ENCODE measurements at regions of chr9 and their contacts with region 1.

Region 1: DNA sequence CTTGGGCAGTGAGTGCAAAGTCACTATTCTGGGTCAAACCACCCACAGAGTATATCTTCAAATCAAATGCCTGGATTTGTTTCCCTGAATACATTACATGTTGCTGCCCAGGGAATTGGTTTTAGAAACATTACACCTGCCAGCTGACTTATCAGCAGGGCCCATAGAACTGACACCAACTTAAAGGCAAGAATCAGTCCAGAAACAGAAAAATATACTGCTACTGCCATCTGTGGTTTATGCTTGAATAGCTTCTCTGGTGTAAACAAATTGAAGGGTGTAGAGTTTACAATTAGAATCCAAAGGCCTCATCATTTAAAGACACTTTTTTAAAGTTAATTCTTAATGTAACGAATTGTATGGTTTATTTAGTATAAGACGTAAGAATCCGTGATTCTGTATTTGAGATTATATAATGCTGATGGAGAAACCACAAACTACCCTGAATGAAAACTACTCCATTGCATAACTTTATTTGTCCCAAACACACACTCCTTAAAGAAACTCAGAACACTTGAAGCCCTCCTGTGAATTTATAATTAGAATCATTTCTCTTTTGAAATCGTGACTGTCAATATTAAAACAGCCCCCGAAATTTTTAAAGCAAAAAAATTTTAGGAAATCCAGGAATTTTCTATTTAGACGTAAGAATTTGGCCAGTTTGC is 6.2 kb downstream of the NR6A1 start:
- DNase-seq: no peak
- H3K4me3 ChIP-seq: no peak overlapping the region
- H3K27ac ChIP-seq: no peak overlapping the region
- H3K4me1 ChIP-seq: peaks cover 10% of the 10 kb centered on the region
- H3K27me3 ChIP-seq: no peaks in the 10 kb centered on the region
- CTCF ChIP-seq: peak; percentile 45 to 52

Region 2: DNA sequence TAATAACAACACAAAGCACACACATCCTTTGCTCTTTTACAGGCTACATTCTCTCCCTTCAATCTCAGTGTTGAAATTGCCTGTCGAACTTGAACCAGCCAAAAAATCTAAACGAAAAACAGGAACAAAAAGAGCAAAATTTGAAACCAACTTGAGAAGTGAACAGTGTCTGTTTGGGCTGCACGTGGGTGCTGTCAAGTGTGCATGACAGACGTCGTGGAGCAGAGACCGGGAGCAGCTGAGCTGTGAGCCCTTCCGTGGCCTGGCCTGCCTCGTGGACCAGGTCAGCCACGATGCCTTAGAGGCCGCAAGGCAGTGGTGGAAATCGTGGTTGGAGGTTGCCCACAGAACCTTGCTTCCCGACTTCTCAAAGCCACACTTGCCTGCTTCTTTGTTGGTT is 800.1 kb before region 1 on chr9:
- CTCF ChIA-PET with region 1: no interaction called
- dilution Hi-C with region 1: no loop called
- in situ Hi-C with region 1: no loop called
- intact Hi-C with region 1: no loop called
- DNase-seq: no peak
- H3K4me3 ChIP-seq: no peak overlapping the region
- H3K27ac ChIP-seq: no peak overlapping the region
- H3K4me1 ChIP-seq: no peaks in the 10 kb centered on the region
- H3K27me3 ChIP-seq: no peaks in the 10 kb centered on the region
- CTCF ChIP-seq: no peak

Region 3: GRCh38 chr9:124066783-124067563 is 697.9 kb before region 1 on chr9:
- CTCF ChIA-PET with region 1: no interaction called
- dilution Hi-C with region 1: no loop called
- in situ Hi-C with region 1: no loop called
- intact Hi-C with region 1: no loop called
- DNase-seq: no peak
- H3K4me3 ChIP-seq: no peak overlapping the region
- H3K27ac ChIP-seq: no peak overlapping the region
- H3K4me1 ChIP-seq: no peaks in the 10 kb centered on the region
- H3K27me3 ChIP-seq: no peaks in the 10 kb centered on the region
- CTCF ChIP-seq: no peak

Region 4: DNA sequence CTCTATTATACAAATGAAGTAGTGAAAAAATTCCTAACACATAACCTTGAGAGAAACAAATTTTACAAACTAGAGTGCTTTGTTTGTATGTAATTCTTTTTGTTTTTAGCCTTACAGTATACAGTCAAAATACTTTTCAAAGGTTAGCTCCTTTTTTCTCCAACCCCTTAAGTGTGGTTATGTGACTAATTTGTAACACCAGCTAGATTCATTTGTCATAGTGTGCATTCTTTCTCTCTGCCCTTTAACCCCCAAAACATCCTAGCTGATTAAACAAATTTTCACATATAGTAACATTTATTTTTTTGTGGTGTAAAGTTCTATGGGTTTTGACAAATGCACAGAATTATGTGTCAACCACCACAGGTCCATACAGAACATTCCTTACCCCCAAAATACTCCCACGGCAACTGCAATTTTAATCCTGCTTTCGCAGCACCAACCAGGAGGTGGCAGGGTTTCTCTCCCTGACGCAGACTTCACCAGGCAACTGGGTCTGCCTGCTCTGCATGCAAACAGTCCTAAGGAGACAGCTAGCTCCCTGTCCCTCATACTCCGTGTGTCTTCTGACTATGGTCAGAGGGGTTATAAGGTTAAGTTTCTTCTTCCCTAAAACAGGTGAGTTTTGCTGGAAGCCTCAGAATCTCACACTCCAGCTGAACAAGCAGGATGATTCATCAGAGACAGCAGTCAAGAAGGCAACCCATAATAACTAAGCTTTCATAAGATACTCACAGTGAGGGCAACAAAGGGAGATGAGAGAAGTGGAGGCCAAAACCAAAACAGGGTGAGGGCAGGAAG is 213.2 kb before region 1 on chr9:
- CTCF ChIA-PET with region 1: interaction called, 3 read pairs
- dilution Hi-C with region 1: no loop called
- in situ Hi-C with region 1: no loop called
- intact Hi-C with region 1: loop called (anchors 5 kb)
- DNase-seq: peak; percentile 76
- H3K4me3 ChIP-seq: no peak overlapping the region
- H3K27ac ChIP-seq: no peak overlapping the region
- H3K4me1 ChIP-seq: peaks cover 11% of the 10 kb centered on the region
- H3K27me3 ChIP-seq: no peaks in the 10 kb centered on the region
- CTCF ChIP-seq: peak; percentile 76 to 85

Region 5: DNA sequence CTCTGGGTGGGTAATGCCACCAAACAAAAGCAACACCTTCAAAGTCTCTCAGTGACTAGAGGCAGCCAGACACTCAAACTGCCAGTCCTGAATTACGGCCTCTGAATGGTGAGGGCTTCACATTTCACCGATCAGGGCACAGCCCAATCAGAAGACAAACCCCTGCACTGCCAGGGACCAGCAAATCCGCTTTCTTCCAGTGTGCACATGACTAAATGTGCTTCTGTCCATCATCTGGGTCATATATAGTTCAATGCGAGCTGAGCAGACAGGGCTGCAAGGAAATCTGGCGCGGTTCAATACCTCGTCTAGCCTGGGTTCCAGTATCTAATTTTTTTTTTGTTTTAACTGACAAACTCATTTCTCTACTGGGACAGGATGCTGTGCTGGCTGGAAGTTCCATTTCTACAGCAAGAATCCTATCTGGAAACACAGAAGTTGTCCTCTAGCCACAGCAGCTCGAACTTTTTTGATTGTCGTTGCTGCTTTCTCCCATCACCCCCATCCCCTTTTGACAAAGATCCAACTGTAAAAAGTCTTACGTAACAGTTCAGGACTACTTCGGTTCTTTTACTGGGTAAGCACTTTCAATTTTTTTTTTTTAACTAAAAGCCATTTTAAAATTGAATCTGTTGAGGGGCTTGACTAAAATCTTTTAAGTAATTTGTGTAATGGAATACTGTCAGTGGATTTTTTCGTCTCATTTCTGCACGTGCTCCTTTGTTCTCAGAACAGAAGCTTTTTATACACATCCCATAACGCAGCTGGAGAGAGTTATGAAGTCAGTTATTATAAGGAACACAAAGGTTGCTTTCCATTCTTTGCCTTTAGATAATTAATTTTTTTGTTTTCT is 106.5 kb before region 1 on chr9:
- CTCF ChIA-PET with region 1: interaction called, 6 read pairs
- dilution Hi-C with region 1: loop called (anchors 5 kb)
- in situ Hi-C with region 1: no loop called
- intact Hi-C with region 1: loop called (anchors 5 kb)
- DNase-seq: peak; percentile 94
- H3K4me3 ChIP-seq: peak overlapping the region; percentile 49 to 95 (median 73)
- H3K27ac ChIP-seq: peak overlapping the region; percentile 95
- H3K4me1 ChIP-seq: peaks cover 17% of the 10 kb centered on the region
- H3K27me3 ChIP-seq: no peaks in the 10 kb centered on the region
- CTCF ChIP-seq: no peak